G401 (cell line): ENCODE measurements at regions of chr22 and their contacts with region 1.

Region 1: DNA sequence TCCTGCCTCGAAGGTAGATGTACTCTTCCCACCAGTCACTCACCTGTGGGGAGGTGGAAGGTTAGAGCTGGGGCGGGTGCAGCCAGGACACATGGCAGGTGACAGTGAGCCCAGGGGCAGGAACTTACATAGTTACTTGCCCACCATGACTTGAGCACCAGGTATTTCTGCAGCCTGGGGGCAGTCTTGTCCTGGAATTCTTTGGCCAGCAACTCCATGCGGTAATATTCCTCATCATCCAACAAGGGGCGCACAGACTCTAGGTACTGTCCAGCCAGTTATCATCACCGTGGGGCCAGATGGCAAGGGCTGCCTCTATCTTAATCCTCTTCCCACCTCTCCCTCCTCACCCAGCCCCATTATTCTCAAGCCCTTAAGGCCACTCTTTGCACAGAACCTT is 2.2 kb downstream of the CPT1B start:
- DNase-seq: peak; percentile 92

Region 2: GRCh38 chr22:50030297-50031188 is 545.5 kb before region 1 on chr22:
- in situ Hi-C with region 1: no loop called
- DNase-seq: peak; percentile 69

Region 3: GRCh38 chr22:50498322-50498890 is 77.7 kb before region 1 on chr22:
- in situ Hi-C with region 1: loop called (anchors 10 kb)
- DNase-seq: peak; percentile 86